PC-9 (cell line): ENCODE measurements at regions of chr20 and their contacts with region 1.

Region 1: DNA sequence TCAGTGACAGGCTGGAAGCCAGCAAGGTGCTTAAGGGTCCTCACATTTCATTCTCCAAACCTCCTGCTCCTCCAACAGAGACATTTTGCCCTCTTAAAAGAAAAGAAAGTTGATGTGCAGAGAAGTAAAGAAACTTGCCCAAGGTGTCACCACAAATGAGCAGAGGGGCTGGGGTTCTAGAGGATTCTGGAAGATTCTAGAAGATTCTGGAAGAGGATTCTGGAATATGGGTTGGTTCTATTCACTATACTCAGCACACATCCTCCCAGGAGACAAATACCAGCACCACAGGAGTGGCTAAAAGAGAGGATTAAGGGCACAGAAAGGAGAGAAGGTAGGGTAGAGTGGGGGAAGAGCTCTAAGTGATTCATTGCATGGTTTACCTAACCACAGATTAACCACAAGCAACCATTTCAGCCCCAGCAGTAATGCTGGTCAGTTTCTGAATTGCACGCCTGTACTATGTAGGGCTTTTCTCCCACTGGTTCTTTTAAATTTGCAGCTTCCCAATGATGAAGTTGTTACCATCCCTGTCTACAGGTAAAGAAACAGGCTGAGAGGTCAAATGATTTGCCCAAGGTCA is 192.6 kb upstream of the PMEPA1 start:
- DNase-seq: peak; percentile 43 to 75
- H3K4me3 ChIP-seq: no peak overlapping the region
- H3K27ac ChIP-seq: no peak overlapping the region
- H3K4me1 ChIP-seq: peaks cover 30% of the 10 kb centered on the region
- H3K27me3 ChIP-seq: no peaks in the 10 kb centered on the region
- CTCF ChIP-seq: peak; percentile 45; the same call in 1 of the 2 replicates

Region 2: GRCh38 chr20:57938158-57939108 is 36.1 kb after region 1 on chr20:
- CTCF ChIA-PET with region 1: no interaction called
- POLR2A ChIA-PET with region 1: no interaction called
- intact Hi-C with region 1: loop called (anchors 5 kb)
- DNase-seq: no peak
- H3K4me3 ChIP-seq: no peak overlapping the region
- H3K27ac ChIP-seq: peak overlapping the region; percentile 71
- H3K4me1 ChIP-seq: peaks cover 44% of the 10 kb centered on the region
- H3K27me3 ChIP-seq: no peaks in the 10 kb centered on the region
- CTCF ChIP-seq: no peak; the same call in 1 of the 2 replicates

Region 3: DNA sequence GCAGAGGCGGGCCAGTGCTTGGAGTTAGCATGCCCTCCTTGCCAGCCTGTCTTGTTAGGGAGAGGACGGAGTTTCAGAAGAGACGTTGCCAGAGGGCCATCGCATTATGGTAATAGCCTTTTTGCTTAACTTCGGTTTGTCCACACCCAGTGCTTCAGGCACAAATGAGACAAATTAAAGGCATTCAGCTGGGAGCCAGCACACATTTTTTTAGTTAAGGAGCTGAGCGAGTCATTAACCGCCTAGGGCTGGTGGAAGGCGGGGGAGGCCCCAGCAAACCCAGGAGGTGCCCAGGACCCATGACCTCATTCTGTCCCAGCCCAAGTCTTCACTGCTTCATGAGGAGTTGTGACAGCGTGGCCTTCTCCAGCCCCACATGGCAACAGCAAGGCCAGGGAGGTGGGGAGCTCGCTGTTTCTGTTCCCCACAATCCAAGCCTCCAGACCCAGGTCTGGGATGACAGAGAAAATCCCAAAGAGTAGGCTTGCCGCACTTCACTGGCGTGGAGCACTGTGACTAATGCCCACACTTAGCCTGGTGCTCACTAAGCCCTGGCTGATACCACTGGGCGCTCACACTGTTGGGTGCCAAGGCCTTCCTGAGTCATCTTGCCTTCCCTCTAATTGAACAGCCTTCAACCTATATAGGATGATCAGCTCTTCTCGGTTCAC is 89.0 kb after region 1 on chr20:
- CTCF ChIA-PET with region 1: no interaction called
- POLR2A ChIA-PET with region 1: no interaction called
- intact Hi-C with region 1: loop called (anchors 2 kb)
- DNase-seq: peak; percentile 84 to 99
- H3K4me3 ChIP-seq: no peak overlapping the region
- H3K27ac ChIP-seq: peak overlapping the region; percentile 82
- H3K4me1 ChIP-seq: peaks cover 47% of the 10 kb centered on the region
- H3K27me3 ChIP-seq: no peaks in the 10 kb centered on the region
- CTCF ChIP-seq: no peak